CD4-positive, alpha-beta memory T cell (primary cell): ENCODE measurements at regions of chr10 and their contacts with region 1.

Region 1: DNA sequence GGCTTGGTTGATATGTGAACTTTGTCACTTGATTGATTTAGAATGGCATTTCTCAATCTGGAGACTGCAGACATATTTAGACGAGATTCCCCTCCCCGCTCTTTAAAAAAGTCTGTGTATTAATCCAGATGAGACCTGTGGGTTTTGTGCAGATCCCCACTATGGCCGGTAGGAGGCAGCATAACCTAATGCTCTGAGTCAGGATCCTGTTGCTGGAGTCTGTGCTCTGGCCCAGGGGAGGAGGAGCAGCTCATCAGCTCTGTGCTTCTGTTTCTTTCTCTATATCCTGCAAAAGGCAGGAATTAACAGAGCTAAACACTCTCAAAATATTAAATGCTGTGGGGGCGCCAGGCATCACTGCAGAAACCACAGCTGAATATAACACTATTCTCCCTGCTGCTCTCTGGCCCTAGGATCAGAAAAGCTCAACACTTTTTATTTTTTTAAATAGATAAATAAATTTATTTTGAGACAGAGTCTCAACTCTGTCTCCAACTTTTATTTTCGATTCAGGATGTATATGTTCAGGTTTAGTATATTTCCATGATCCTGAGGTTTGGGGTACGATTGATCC is 23.9 kb upstream of the SEPHS1 start:
- DNase-seq: peak; percentile 70 to 77 (median 72)
- H3K4me3 ChIP-seq: no peak overlapping the region
- H3K4me3 Mint-ChIP-seq: no peak overlapping the region
- H3K27ac ChIP-seq: no peak overlapping the region
- H3K27ac Mint-ChIP-seq: peak overlapping the region in 1 of 7 donors; percentile 18
- H3K4me1 ChIP-seq: no peaks in the 10 kb centered on the region
- H3K4me1 Mint-ChIP-seq: peaks cover 0 to 1% (median 0%) of the 10 kb centered on the region in 4 donors
- H3K27me3 ChIP-seq: no peaks in the 10 kb centered on the region
- H3K27me3 Mint-ChIP-seq: peaks cover 0 to 2% of the 10 kb centered on the region in 2 donors

Region 2: DNA sequence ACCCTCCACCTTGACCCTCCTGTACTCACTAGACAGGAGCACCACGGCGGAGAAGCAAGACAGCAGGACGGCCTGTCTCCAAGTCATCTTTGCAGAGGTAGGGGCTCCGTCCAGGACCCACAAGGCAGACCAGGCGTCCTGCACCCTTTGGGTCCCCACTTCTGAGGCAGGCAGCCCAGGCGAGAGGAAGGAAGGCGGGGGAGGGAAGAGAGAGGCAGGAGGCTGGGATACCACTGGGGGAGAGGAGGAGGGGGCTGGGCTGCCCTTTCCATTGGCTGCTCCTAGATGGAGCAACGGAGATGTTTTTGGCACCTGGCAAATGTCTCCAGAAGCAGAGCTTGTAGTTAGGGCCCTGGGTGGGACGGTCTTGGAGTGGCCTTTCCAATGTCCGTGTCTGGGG is 137.8 kb before region 1 on chr10 and contains the start of gene UCMA:
- CTCF ChIA-PET with region 1: no interaction called
- POLR2A ChIA-PET with region 1: no interaction called
- intact Hi-C with region 1: no loop called
- DNase-seq: no peak
- H3K4me3 ChIP-seq: no peak within 1 kb of the TSS
- H3K4me3 Mint-ChIP-seq: no peak within 1 kb of the TSS
- H3K27ac ChIP-seq: no peak within 1 kb of the TSS
- H3K27ac Mint-ChIP-seq: no peak within 1 kb of the TSS
- H3K4me1 ChIP-seq: no peaks in the 10 kb centered on the region
- H3K4me1 Mint-ChIP-seq: no peaks in the 10 kb centered on the region
- H3K27me3 ChIP-seq: no peaks in the 10 kb centered on the region
- H3K27me3 Mint-ChIP-seq: peaks cover 0 to 2% of the 10 kb centered on the region in 2 donors
- total RNA-seq, gene UCMA: not detected

Region 3: GRCh38 chr10:13348216-13349017 is 23.6 kb before region 1 on chr10 and contains the start of gene SEPHS1:
- CTCF ChIA-PET with region 1: interaction called, 7 read pairs
- POLR2A ChIA-PET with region 1: interaction called, 8 read pairs
- intact Hi-C with region 1: loop called (anchors 1 kb)
- DNase-seq: peak; percentile 79 to 87 (median 80)
- H3K4me3 ChIP-seq: peak within 1 kb of the TSS; percentile 89 to 93
- H3K4me3 Mint-ChIP-seq: peak within 1 kb of the TSS; percentile 94 to 97 (median 96)
- H3K27ac ChIP-seq: peak within 1 kb of the TSS; percentile 75
- H3K27ac Mint-ChIP-seq: peak within 1 kb of the TSS; percentile 88 to 97 (median 96)
- H3K4me1 ChIP-seq: peaks cover 50% of the 10 kb centered on the region
- H3K4me1 Mint-ChIP-seq: peaks cover 33 to 76% (median 51%) of the 10 kb centered on the region in 4 donors
- H3K27me3 ChIP-seq: no peaks in the 10 kb centered on the region
- H3K27me3 Mint-ChIP-seq: no peaks in the 10 kb centered on the region
- total RNA-seq, gene SEPHS1: 27.2 to 30.6 TPM

Region 4: DNA sequence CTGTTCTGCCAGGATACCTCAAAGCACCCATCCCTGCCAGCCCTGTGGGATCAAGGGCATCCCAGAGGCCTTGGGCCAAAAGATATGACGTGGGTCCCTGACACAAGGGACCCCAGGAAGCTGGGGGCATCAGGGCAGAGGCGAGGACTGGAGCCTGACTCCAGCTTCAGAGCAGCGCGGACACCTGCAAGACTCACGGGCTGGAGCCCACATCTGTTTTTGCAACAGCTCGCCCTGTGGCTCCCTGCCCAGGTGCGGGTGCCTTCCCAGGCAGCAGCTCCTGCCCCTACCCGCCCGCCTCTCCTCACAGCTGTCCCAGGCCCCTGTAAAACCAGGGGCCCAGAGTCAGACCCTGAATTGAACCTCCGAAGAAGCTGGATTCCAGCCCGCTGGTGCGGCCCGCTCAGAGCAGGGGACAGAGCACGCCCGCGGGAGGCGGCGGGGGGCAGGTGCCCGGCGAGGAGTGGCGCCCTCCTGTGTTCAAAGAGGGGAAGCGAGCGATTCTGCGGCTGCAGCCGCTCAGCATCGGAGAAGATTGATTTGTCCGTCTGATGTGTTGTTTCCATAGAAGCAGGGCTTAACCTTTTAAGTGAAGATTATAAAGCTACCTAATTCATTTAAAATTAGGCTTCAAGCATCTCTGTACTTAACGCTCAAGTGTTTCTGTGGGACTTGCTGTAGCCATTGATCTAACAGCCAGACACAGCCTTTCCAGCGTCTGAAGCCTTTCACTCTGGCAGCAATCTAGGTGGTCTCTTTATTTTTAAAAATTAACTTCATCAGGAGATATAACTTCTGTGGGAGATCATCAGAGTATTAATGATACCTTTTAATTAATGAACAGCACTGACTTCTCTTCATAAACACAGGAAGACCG is 68.4 kb after region 1 on chr10:
- CTCF ChIA-PET with region 1: interaction called, 61 read pairs
- POLR2A ChIA-PET with region 1: no interaction called
- intact Hi-C with region 1: loop called (anchors 1 kb)
- DNase-seq: peak; percentile 50 to 65 (median 62)
- H3K4me3 ChIP-seq: peak overlapping the region in 1 of 2 donors; percentile 38
- H3K4me3 Mint-ChIP-seq: peak overlapping the region; percentile 27 to 90 (median 74)
- H3K27ac ChIP-seq: no peak overlapping the region
- H3K27ac Mint-ChIP-seq: peak overlapping the region in 2 of 7 donors; percentile 31 to 78
- H3K4me1 ChIP-seq: peaks cover 15% of the 10 kb centered on the region
- H3K4me1 Mint-ChIP-seq: peaks cover 8 to 13% (median 10%) of the 10 kb centered on the region in 4 donors
- H3K27me3 ChIP-seq: peaks cover 30% of the 10 kb centered on the region
- H3K27me3 Mint-ChIP-seq: peaks cover 40 to 42% of the 10 kb centered on the region in 2 donors

Region 5: DNA sequence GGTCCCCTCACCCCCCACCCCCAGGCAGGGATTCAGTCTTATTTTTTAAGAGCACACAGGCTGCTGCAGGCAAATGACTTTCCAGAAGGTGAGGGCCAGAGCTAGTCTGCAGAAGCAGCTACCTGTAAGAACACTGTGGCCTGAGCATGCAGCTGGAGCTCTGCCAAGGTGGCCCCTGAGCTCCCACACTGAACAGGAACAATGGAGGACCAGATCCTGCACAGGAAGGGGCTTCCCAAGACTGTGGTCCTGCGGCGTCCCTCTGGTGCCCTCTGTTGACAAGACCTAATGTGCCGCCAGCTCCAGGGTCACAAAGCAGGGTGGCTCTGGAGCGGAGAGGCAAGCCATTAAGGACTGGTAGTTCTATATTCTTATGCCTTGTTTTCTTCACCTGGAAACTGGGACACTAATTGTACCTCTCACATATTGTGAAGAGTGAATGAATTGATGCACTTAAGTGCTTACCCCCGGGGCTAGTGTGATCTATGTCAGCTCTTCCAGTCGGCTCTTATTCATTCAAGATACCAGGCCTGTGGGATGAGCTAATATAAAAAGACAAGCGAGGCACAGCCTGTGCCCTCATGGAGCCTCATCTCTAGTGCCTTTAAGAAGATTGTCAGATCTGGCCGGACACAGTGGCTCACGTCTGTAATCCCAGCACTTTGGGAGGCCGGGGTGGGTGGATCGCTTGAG is 164.8 kb after region 1 on chr10:
- CTCF ChIA-PET with region 1: interaction called, 7 read pairs
- POLR2A ChIA-PET with region 1: no interaction called
- intact Hi-C with region 1: loop called (anchors 5 kb)
- DNase-seq: no peak
- H3K4me3 ChIP-seq: no peak overlapping the region
- H3K4me3 Mint-ChIP-seq: no peak overlapping the region
- H3K27ac ChIP-seq: no peak overlapping the region
- H3K27ac Mint-ChIP-seq: no peak overlapping the region
- H3K4me1 ChIP-seq: no peaks in the 10 kb centered on the region
- H3K4me1 Mint-ChIP-seq: peaks cover 0 to 3% (median 0%) of the 10 kb centered on the region in 4 donors
- H3K27me3 ChIP-seq: peaks cover 6% of the 10 kb centered on the region
- H3K27me3 Mint-ChIP-seq: peaks cover 32 to 45% of the 10 kb centered on the region in 2 donors

Region 6: DNA sequence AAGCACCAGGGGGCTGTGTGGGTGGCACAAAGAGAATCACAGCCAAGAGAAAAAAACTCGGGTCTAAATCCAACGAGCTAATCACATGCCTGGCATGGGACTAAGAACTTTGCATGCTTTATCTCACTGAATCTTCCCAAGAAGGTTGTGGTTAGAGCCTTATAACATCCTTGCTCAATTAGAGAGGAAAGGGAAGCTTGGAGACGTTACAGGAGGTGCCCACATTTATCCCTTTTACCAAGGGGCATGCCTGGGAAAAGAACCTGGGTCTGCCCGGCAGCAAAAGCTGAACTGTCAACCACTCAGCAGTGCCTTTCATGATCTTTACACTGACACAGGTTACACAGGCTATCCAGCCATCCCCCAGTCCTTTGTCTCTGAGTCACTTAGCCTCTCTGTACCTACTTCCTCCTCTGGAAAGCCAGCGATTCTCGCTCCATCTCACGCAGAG is 404.9 kb after region 1 on chr10:
- CTCF ChIA-PET with region 1: interaction called, 6 read pairs
- POLR2A ChIA-PET with region 1: no interaction called
- intact Hi-C with region 1: loop called (anchors 1 kb)
- DNase-seq: no peak
- H3K4me3 ChIP-seq: no peak overlapping the region
- H3K4me3 Mint-ChIP-seq: no peak overlapping the region
- H3K27ac ChIP-seq: no peak overlapping the region
- H3K27ac Mint-ChIP-seq: no peak overlapping the region
- H3K4me1 ChIP-seq: no peaks in the 10 kb centered on the region
- H3K4me1 Mint-ChIP-seq: peaks cover 0 to 6% (median 2%) of the 10 kb centered on the region in 4 donors
- H3K27me3 ChIP-seq: no peaks in the 10 kb centered on the region
- H3K27me3 Mint-ChIP-seq: peaks cover 20 to 21% of the 10 kb centered on the region in 2 donors